HepG2 (cell line): ENCODE measurements at regions of chr20 and their contacts with region 1.

Region 1: DNA sequence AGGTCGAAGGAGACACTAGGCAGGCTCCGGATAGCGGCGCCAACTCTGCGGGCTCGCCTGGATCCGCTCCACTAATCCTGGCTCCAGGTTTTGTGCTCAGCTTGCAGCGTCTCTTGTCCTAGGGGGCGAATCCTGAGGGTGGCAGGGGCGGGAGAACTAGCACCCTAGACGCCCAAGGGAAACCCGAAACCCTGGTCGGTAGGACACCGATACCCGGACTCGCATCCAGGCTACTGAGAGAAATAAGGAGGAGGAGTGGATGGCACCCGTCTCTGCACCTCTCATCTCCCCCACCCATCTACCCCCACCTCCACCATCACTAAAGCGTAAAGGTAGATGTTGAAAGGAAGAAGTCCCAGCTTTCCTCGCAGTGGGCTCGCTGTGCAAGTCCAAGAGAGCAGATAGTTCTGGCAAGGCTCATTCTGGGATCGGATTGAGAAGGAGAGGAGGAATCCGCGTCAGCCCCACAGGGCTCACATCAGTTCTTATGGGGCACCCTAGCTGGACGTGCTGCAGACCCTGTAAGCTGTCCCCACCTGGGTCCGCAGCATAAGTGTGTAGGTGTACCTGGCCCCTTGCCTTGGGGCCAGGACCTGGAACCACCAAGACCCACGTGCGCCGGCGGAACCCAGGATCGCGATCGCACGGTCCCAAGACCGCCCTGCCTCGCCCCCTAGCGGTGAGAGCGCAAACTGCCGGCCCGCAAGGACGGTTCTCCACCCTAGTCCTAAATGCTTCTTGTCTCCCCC is 6.9 kb downstream of the SLC32A1 start:
- DNase-seq: peak; percentile 62
- ATAC-seq: peak; percentile 85
- H3K4me3 ChIP-seq: peak overlapping the region; percentile 10 to 71 (median 33)
- H3K27ac ChIP-seq: no peak overlapping the region
- H3K4me1 ChIP-seq: peaks cover 15% of the 10 kb centered on the region
- H3K27me3 ChIP-seq: peaks cover 35 to 82% of the 10 kb centered on the region in 2 experiments
- CTCF ChIP-seq: peak; percentile 99
- EP300 ChIP-seq: 0 out of 4 replicates have a peak, but pooled peaks of 1 of the 2 experiments have one; percentile 30
- POLR2A ChIP-seq: no peak
- RAD21 ChIP-seq: peak; percentile 82

Region 2: DNA sequence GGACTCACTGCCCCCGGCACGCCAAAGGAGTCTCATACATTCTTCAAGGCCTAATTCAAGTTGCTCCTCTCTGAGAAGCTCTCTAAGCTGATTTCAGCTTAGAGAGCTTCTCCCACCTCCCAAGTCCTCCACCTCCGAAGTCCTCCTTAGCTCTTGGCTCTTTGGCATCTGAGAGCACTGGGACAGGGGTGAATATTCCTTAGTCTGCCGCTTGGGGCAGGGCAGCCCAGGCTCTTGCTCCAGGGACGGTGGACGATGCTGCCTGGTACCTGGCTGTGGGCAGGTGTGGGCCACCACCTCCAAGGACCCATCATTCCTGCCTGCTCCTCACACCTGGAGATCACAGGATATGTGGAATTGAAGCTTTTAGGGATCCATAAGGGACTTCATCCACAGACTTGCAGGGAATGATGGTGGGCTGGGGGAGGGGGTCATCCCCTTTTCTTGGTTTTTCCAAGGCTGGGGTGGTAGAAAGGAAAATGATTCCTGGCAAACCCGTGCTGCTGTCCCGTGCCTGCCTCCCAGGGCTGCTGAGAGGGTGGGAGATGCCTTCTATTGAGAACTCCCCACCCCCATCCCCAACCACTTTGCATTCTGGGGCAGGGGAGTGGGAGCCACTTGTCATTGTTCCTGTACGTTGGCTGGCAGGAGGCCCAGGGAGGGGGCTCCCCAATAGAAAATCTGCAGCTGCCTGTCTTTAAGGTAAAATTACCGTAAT is 72.1 kb before region 1 on chr20:
- CTCF ChIA-PET with region 1: interaction called, 12 read pairs
- POLR2A ChIA-PET with region 1: no interaction called
- in situ Hi-C with region 1: no loop called
- intact Hi-C with region 1: loop called (anchors 2 kb)
- DNase-seq: peak; percentile 60
- ATAC-seq: peak; percentile 96
- H3K4me3 ChIP-seq: no peak overlapping the region
- H3K27ac ChIP-seq: no peak overlapping the region
- H3K4me1 ChIP-seq: peaks cover 13% of the 10 kb centered on the region; the same call in 1 of the 2 replicates
- H3K27me3 ChIP-seq: peaks cover 7 to 35% of the 10 kb centered on the region in 2 experiments; a peak in 4 of 5 replicates
- CTCF ChIP-seq: peak; percentile 89
- EP300 ChIP-seq: no peak
- POLR2A ChIP-seq: no peak
- RAD21 ChIP-seq: peak; percentile 74